ENCODE measurements at regions of chr4 and their contacts with region 1.

Region 1: GRCh38 chr4:13654158-13654797 is 26.8 kb upstream of the BOD1L1 start:
- DNase-seq: peak; percentile 77
- CTCF ChIP-seq: peak; percentile 94

Region 2: GRCh38 chr4:13627606-13628301 is 26.5 kb before region 1 on chr4 and contains the start of gene BOD1L1:
- CTCF ChIA-PET with region 1: interaction called, 17 read pairs
- POLR2A ChIA-PET with region 1: no interaction called
- DNase-seq: peak; percentile 90
- CTCF ChIP-seq: peak; percentile 63

Region 3: DNA sequence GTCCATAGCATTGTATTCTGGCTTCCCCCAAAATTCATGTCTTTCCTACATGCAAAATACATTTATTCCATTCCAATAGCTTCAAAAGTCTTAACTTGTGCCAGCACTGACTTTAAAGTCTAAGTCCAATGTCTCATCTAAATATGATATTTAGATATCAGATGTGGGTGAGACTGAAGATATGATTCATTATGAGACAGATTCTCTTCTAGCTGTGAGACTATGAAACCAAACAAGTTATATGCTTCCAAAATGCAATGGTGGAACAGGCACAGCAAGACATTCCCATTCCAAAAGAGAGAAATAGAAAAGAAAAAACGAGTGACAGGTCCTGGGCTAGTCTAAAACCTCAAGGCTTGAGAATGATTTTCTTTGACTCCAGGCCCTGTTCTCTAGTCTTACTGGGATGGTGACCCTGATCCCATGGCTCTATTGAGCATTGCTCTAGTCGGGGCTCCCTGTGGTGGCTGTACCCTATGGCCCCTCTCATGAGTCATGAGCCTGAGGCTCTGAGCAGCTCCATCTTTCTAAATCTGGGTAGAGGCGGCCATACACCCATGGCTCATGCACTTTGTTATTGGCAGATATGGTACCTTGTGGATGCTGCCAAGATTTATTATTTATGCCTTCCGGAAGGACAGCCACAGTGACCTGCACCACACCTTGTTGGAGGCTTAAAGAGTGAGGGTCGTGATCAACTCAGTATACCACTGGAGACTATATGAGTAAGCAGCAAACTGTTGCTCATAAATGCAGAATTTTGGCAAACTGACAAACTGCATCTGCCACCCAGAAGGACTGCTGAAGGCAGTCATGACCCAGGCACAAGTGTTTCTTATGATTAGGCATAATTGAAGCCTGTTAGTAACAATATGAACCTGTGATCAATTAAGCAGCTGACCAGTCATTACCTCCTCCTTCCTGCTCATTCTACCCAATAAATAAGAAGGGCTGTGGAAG is 11.7 kb after region 1 on chr4:
- CTCF ChIA-PET with region 1: interaction called, 17 read pairs
- POLR2A ChIA-PET with region 1: no interaction called
- DNase-seq: no peak
- CTCF ChIP-seq: no peak

Region 4: DNA sequence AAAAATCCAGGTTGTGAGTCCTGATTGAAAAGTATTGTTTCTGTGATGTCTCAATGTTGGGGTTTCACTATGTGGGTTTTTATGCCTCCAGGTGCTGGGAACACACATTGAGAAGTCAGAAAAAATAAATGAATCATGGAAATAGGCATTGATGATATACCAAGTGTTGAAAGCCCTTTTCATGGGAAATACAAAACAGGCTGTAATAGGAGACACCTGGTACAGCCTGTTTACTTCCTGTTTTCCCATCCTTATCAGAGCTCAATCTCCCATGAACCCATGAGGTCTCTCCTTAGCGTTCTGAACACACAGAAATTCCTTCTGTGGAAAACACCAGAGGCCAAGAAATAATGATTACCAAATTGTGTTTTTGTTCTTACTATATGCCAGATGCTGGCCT is 79.5 kb after region 1 on chr4:
- CTCF ChIA-PET with region 1: no interaction called
- POLR2A ChIA-PET with region 1: no interaction called
- DNase-seq: no peak
- CTCF ChIP-seq: no peak

Region 5: GRCh38 chr4:13829457-13829856 is 175.2 kb after region 1 on chr4:
- CTCF ChIA-PET with region 1: no interaction called
- POLR2A ChIA-PET with region 1: no interaction called
- DNase-seq: no peak
- CTCF ChIP-seq: no peak

Region 6: GRCh38 chr4:15162465-15163283 is 1508.4 kb after region 1 on chr4:
- CTCF ChIA-PET with region 1: interaction called, 30 read pairs
- POLR2A ChIA-PET with region 1: no interaction called
- DNase-seq: peak; percentile 21
- CTCF ChIP-seq: peak; percentile 44

Region 7: GRCh38 chr4:15457406-15458201 is 1803.3 kb after region 1 on chr4:
- CTCF ChIA-PET with region 1: interaction called, 11 read pairs
- POLR2A ChIA-PET with region 1: no interaction called
- DNase-seq: peak; percentile 28
- CTCF ChIP-seq: peak; percentile 63

Measured in GM10248 (cell line).